Ovary (tissue), 10 donors: ENCODE measurements at regions of chr7 and their contacts with region 1.

Region 1: GRCh38 chr7:142134909-142135308 is 23.4 kb downstream of the MGAM2 start:
- DNase-seq: no peak
- H3K4me3 ChIP-seq: no peak overlapping the region
- H3K27ac ChIP-seq: no peak overlapping the region
- H3K4me1 ChIP-seq: no peaks in the 10 kb centered on the region
- H3K27me3 ChIP-seq: no peaks in the 10 kb centered on the region
- CTCF ChIP-seq: no peak
- EP300 ChIP-seq: no peak
- POLR2A ChIP-seq: no peak

Region 2: DNA sequence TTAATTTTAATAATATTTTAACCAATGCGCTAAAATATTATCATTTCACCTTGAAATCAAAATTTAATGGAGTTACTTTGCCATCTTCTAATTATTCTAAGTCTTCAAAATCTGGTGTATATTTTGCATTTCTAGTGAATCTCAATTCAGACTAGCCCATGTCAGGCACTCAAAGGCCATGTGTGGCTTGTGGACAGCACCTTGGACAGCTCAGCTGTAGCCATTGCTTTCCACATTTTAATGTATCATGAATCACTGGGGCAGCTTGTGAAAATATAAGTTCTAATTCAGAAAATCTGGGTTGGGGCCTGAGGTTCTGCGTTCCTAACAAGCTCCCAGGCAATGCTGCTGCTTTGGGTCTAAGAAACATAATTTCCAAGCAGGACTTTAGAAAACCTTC is 33.8 kb after region 1 on chr7:
- intact Hi-C with region 1: loop called in 1 of 4 experiments (anchors 1 kb)
- DNase-seq: no peak
- H3K4me3 ChIP-seq: no peak overlapping the region
- H3K27ac ChIP-seq: no peak overlapping the region
- H3K4me1 ChIP-seq: no peaks in the 10 kb centered on the region
- H3K27me3 ChIP-seq: no peaks in the 10 kb centered on the region
- CTCF ChIP-seq: no peak
- EP300 ChIP-seq: no peak
- POLR2A ChIP-seq: no peak